CD8-positive, alpha-beta T cell (primary cell): ENCODE measurements at regions of chr3 and their contacts with region 1.

Region 1: GRCh38 chr3:96069065-96069464 is 745.3 kb upstream of the EPHA6 start:
- DNase-seq: no peak
- ATAC-seq: no peak
- H3K4me3 ChIP-seq: no peak overlapping the region
- H3K4me3 Mint-ChIP-seq: no peak overlapping the region
- H3K27ac ChIP-seq: no peak overlapping the region
- H3K27ac Mint-ChIP-seq: no peak overlapping the region
- H3K4me1 ChIP-seq: no peaks in the 10 kb centered on the region
- H3K4me1 Mint-ChIP-seq: no peaks in the 10 kb centered on the region
- H3K27me3 ChIP-seq: no peaks in the 10 kb centered on the region
- H3K27me3 Mint-ChIP-seq: no peaks in the 10 kb centered on the region
- CTCF ChIP-seq: no peak

Region 2: GRCh38 chr3:96058596-96058995 is 10.5 kb before region 1 on chr3:
- CTCF ChIA-PET with region 1: no interaction called
- POLR2A ChIA-PET with region 1: no interaction called
- intact Hi-C with region 1: no loop called
- DNase-seq: no peak
- ATAC-seq: no peak
- H3K4me3 ChIP-seq: no peak overlapping the region
- H3K4me3 Mint-ChIP-seq: no peak overlapping the region
- H3K27ac ChIP-seq: no peak overlapping the region
- H3K27ac Mint-ChIP-seq: no peak overlapping the region
- H3K4me1 ChIP-seq: no peaks in the 10 kb centered on the region
- H3K4me1 Mint-ChIP-seq: no peaks in the 10 kb centered on the region
- H3K27me3 ChIP-seq: no peaks in the 10 kb centered on the region
- H3K27me3 Mint-ChIP-seq: no peaks in the 10 kb centered on the region
- CTCF ChIP-seq: no peak

Region 3: DNA sequence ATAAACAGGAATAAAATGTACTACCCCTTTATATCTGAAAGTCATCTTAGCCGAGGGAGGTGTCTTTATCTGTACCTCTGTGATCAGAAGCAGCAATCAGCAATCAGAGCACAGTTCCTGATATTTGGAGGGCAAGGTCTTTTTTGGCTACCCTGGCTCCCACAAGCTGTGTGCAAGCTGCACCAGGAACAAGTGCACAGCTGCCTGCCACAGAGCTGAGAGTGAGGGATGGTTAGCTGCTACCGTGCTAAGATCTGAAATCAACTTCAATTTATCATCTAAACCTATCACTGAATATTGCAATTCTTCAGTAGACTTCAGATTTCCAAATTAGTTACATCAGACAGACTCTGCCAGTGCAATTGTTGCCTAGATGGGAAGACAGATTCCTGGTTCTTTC is 1290.9 kb after region 1 on chr3:
- CTCF ChIA-PET with region 1: no interaction called
- POLR2A ChIA-PET with region 1: no interaction called
- intact Hi-C with region 1: loop called in 1 of 2 experiments (anchors 10 kb)
- DNase-seq: no peak
- ATAC-seq: no peak
- H3K4me3 ChIP-seq: no peak overlapping the region
- H3K4me3 Mint-ChIP-seq: no peak overlapping the region
- H3K27ac ChIP-seq: no peak overlapping the region
- H3K27ac Mint-ChIP-seq: no peak overlapping the region
- H3K4me1 ChIP-seq: no peaks in the 10 kb centered on the region
- H3K4me1 Mint-ChIP-seq: no peaks in the 10 kb centered on the region
- H3K27me3 ChIP-seq: no peaks in the 10 kb centered on the region
- H3K27me3 Mint-ChIP-seq: no peaks in the 10 kb centered on the region
- CTCF ChIP-seq: no peak